HepG2 (cell line): ENCODE measurements at regions of chr13 and their contacts with region 1.

Region 1: GRCh38 chr13:93248627-93249047 is 22.0 kb downstream of the GPC6 start:
- DNase-seq: peak; percentile 92
- ATAC-seq: peak; percentile 95
- H3K4me3 ChIP-seq: peak overlapping the region; percentile 44 to 57 (median 50); a peak in 5 of 6 replicates
- H3K27ac ChIP-seq: peak overlapping the region; percentile 95
- H3K4me1 ChIP-seq: peaks cover 45% of the 10 kb centered on the region
- H3K27me3 ChIP-seq: no peaks in the 10 kb centered on the region
- CTCF ChIP-seq: peak; percentile 95
- EP300 ChIP-seq: peak in 1 of 2 experiments; percentile 58; a peak in 1 of 4 replicates
- POLR2A ChIP-seq: peak in 1 of 2 experiments; percentile 60; a peak in 2 of 4 replicates
- RAD21 ChIP-seq: peak; percentile 97

Region 2: DNA sequence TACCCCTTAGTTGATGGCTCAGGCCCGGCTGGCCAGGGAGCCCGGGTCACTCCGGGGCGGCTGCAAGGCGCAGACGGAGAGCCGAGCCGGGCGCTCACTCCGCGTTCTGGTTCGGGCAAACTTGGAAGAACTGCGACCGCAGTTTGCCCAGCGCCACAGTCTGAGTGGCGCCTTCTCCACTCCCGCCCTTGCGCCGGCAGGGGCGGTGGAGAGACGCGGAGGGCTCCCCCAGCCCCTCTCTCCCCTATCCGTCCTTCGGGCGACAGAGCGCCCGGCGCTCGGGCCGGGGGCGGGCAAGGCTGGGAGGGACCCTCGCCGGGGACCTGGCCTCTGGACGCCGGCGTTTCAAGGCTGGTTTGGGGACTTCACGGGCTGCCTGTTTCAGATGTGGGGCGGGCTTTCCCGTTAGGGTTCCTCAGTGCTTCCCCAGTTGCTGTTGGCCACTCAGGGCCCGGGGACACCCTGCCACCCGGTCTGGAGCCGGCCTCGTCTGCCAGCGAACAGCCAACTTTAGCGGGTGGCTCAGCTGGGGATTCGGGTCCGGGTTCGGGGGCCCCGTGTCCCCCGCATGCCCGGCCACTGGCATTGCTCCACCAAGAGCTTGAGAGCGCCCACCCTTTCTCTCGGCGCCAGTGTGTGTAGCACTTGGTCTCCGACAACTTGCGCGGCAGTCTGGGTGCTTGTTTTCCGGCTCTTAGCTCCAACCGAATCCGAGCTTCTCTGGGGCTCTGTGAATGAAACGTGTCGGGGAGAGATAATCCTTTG is 20.6 kb before region 1 on chr13:
- CTCF ChIA-PET with region 1: no interaction called
- POLR2A ChIA-PET with region 1: interaction called, 31 read pairs
- in situ Hi-C with region 1: no loop called
- intact Hi-C with region 1: no loop called
- DNase-seq: peak; percentile 80
- ATAC-seq: peak; percentile 88
- H3K4me3 ChIP-seq: peak overlapping the region; percentile 90 to 98 (median 94)
- H3K27ac ChIP-seq: peak overlapping the region; percentile 85
- H3K4me1 ChIP-seq: peaks cover 69% of the 10 kb centered on the region
- H3K27me3 ChIP-seq: no peaks in the 10 kb centered on the region; a peak in 1 of 5 replicates
- CTCF ChIP-seq: peak; percentile 62
- EP300 ChIP-seq: peak in 1 of 2 experiments; percentile 38; a peak in 1 of 4 replicates
- POLR2A ChIP-seq: peak in 1 of 2 experiments; percentile 47; a peak in 2 of 4 replicates
- RAD21 ChIP-seq: peak; percentile 42

Region 3: DNA sequence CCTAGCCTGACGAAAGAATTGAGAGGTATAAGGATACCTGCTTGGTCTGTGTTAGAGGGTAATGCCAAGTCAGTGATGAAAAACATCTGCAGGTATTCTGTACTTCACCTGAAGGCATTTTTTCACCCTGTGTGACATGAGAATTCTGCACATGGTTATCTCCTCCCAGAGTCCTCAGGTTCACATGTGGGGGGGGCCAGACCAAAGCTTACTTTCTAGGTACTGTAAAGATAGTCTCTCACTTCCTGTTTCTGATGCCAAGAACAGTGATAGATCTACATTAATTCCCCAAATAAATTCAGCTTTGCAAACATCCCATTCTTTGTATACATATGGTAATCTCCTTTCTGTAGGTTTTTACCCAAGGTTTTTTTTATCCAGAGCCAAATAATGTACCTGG is 31.3 kb after region 1 on chr13:
- CTCF ChIA-PET with region 1: no interaction called
- POLR2A ChIA-PET with region 1: no interaction called
- in situ Hi-C with region 1: no loop called
- intact Hi-C with region 1: no loop called
- DNase-seq: no peak
- ATAC-seq: no peak
- H3K4me3 ChIP-seq: no peak overlapping the region
- H3K27ac ChIP-seq: no peak overlapping the region
- H3K4me1 ChIP-seq: no peaks in the 10 kb centered on the region
- H3K27me3 ChIP-seq: no peaks in the 10 kb centered on the region
- CTCF ChIP-seq: no peak
- EP300 ChIP-seq: no peak
- POLR2A ChIP-seq: no peak
- RAD21 ChIP-seq: no peak

Region 4: GRCh38 chr13:93364166-93364565 is 115.5 kb after region 1 on chr13:
- CTCF ChIA-PET with region 1: no interaction called
- POLR2A ChIA-PET with region 1: no interaction called
- in situ Hi-C with region 1: no loop called
- intact Hi-C with region 1: loop called (anchors 5 kb)
- DNase-seq: no peak
- ATAC-seq: no peak
- H3K4me3 ChIP-seq: no peak overlapping the region
- H3K27ac ChIP-seq: no peak overlapping the region
- H3K4me1 ChIP-seq: peaks cover 18% of the 10 kb centered on the region
- H3K27me3 ChIP-seq: no peaks in the 10 kb centered on the region
- CTCF ChIP-seq: no peak
- EP300 ChIP-seq: no peak
- POLR2A ChIP-seq: no peak
- RAD21 ChIP-seq: no peak

Region 5: GRCh38 chr13:93963266-93964145 is 714.9 kb after region 1 on chr13:
- CTCF ChIA-PET with region 1: no interaction called
- POLR2A ChIA-PET with region 1: interaction called, 6 read pairs
- in situ Hi-C with region 1: loop called (anchors 10 kb)
- intact Hi-C with region 1: no loop called
- DNase-seq: peak; percentile 83
- ATAC-seq: peak; percentile 61
- H3K4me3 ChIP-seq: no peak overlapping the region; a peak in 2 of 6 replicates
- H3K27ac ChIP-seq: peak overlapping the region; percentile 39
- H3K4me1 ChIP-seq: peaks cover 52% of the 10 kb centered on the region
- H3K27me3 ChIP-seq: no peaks in the 10 kb centered on the region
- CTCF ChIP-seq: no peak
- EP300 ChIP-seq: peak in 1 of 2 experiments; percentile 84; a peak in 2 of 4 replicates
- POLR2A ChIP-seq: no peak
- RAD21 ChIP-seq: no peak

Region 6: GRCh38 chr13:94291631-94292322 is 1043.1 kb after region 1 on chr13:
- CTCF ChIA-PET with region 1: no interaction called
- POLR2A ChIA-PET with region 1: interaction called, 7 read pairs
- in situ Hi-C with region 1: no loop called
- intact Hi-C with region 1: loop called (anchors 2 kb)
- DNase-seq: peak; percentile 92
- ATAC-seq: peak; percentile 98
- H3K4me3 ChIP-seq: peak overlapping the region in 1 of 3 experiments; percentile 12; a peak in 2 of 6 replicates
- H3K27ac ChIP-seq: peak overlapping the region; percentile 81
- H3K4me1 ChIP-seq: peaks cover 46% of the 10 kb centered on the region
- H3K27me3 ChIP-seq: no peaks in the 10 kb centered on the region
- CTCF ChIP-seq: no peak
- EP300 ChIP-seq: peak; percentile 89 to 99
- POLR2A ChIP-seq: no peak; a peak in 1 of 4 replicates
- RAD21 ChIP-seq: 0 out of 2 replicates have a peak, but pooled peaks have one; percentile 29

Region 7: GRCh38 chr13:94362411-94362909 is 1113.8 kb after region 1 on chr13:
- CTCF ChIA-PET with region 1: interaction called, 4 read pairs
- POLR2A ChIA-PET with region 1: no interaction called
- in situ Hi-C with region 1: no loop called
- intact Hi-C with region 1: loop called (anchors 1 kb)
- DNase-seq: peak; percentile 46
- ATAC-seq: peak; percentile 87
- H3K4me3 ChIP-seq: no peak overlapping the region
- H3K27ac ChIP-seq: no peak overlapping the region
- H3K4me1 ChIP-seq: no peaks in the 10 kb centered on the region
- H3K27me3 ChIP-seq: no peaks in the 10 kb centered on the region
- CTCF ChIP-seq: peak; percentile 91
- EP300 ChIP-seq: no peak
- POLR2A ChIP-seq: no peak
- RAD21 ChIP-seq: peak; percentile 87